ENCODE measurements at regions of chr10 and their contacts with region 1.

Region 1: DNA sequence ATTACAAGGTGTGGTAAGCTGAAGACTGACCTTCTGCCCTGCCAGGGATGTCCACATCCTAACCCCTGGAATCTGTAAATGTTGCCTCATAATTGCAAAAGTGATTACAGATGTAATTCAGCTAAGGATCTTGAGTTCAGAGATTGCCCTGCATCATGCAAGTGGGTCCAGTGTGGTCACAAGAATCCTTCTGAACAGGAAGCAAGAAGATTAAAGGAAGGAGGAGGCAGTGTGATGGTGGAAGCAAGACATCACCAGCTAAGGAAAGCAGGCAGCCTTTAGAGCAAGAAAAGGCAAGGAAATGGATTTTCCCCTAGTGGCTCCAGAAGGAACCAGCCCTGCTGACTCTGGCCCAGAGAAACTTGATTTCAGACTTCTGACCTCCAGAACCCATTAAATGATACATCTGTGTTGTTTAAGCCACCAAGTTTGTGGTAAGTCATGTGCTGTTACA is 78.1 kb downstream of the USP6NL start:
- DNase-seq: peak; percentile 56
- H3K4me3 ChIP-seq: peak overlapping the region; percentile 62
- H3K27ac ChIP-seq: peak overlapping the region; percentile 95
- H3K4me1 ChIP-seq: peaks cover 100% of the 10 kb centered on the region
- CTCF ChIP-seq: peak; percentile 66

Region 2: GRCh38 chr10:11227103-11227502 is 306.3 kb before region 1 on chr10:
- CTCF ChIA-PET with region 1: no interaction called
- POLR2A ChIA-PET with region 1: no interaction called
- intact Hi-C with region 1: no loop called
- DNase-seq: no peak
- H3K4me3 ChIP-seq: no peak overlapping the region
- H3K27ac ChIP-seq: no peak overlapping the region
- H3K4me1 ChIP-seq: no peaks in the 10 kb centered on the region
- CTCF ChIP-seq: no peak

Region 3: DNA sequence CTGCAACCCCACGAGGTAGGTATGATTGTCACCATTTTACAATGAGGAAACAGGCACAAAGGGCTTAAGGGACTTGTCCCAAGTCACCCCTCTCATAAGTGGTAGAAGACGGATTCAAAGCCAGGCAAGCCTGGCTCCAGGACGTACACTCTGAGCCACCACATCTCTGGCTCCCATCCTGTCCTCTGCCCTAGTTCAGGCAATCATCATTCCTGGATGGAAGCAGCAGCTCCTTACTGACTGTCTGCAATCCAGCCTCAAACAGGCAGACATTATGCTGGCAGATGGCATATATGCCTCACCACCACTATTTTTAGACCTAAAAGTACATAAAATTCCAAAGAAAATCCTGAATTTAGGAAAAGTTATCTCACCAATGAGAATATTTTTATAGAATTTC is 22.6 kb before region 1 on chr10:
- CTCF ChIA-PET with region 1: no interaction called
- POLR2A ChIA-PET with region 1: no interaction called
- intact Hi-C with region 1: no loop called
- DNase-seq: no peak
- H3K4me3 ChIP-seq: no peak overlapping the region
- H3K27ac ChIP-seq: no peak overlapping the region
- H3K4me1 ChIP-seq: peaks cover 6% of the 10 kb centered on the region
- CTCF ChIP-seq: no peak

Region 4: DNA sequence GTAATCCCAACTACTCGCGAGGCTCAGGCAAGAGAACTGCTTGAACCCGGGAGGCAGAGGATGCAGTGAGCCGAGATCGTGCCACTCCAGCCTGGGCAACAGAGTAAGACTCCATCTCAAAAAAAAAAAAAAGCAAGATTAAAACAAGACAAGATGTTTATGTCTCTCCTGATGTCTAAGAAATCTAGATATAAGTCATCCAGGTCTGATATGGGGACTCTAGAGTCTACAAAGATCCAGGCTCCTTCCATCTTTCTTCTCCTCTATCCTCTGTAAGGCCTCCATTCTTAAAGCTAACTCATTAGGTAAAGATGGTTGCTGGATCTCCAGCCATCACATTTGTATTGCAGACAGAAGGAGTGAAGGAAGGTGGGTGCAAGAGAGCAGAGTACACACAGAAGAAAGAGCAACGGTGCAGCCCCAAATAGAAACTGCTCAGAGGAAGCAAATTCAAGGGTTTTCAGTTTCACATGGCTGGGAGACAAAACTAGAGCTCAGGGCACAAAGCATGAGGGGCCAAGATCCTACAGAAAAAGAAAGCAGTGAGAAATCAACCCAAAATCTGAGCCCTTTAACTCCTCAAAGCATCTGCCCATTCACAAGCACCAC is 20.5 kb after region 1 on chr10:
- CTCF ChIA-PET with region 1: interaction called, 10 read pairs
- POLR2A ChIA-PET with region 1: interaction called, 21 read pairs
- intact Hi-C with region 1: loop called (anchors 2 kb)
- DNase-seq: peak; percentile 82
- H3K4me3 ChIP-seq: peak overlapping the region; percentile 56
- H3K27ac ChIP-seq: peak overlapping the region; percentile 90
- H3K4me1 ChIP-seq: peaks cover 74% of the 10 kb centered on the region
- CTCF ChIP-seq: no peak

Region 5: DNA sequence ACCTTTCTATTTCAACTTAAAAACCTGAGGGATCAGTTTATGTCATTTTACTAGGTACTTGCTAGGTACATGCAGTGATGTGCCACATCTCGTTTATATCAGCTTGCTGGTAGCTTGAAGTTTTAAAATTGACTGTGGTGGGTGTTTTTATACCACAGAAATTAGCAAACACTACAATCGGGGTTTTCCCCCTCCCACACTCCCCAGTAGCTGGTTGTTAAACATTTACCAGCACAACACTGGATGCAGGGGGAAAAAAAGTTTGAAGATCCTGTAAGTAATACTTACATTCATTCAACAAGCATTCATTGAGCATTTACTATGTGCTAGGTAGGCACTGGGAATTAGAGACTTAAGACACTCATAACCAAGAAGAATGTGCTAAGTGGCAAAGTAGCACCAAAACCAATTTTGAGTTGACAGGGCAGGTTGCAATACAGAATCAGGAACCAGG is 45.5 kb after region 1 on chr10:
- CTCF ChIA-PET with region 1: no interaction called
- POLR2A ChIA-PET with region 1: interaction called, 10 read pairs
- intact Hi-C with region 1: loop called (anchors 5 kb)
- DNase-seq: no peak
- H3K4me3 ChIP-seq: no peak overlapping the region
- H3K27ac ChIP-seq: no peak overlapping the region
- H3K4me1 ChIP-seq: peaks cover 40% of the 10 kb centered on the region
- CTCF ChIP-seq: no peak

Region 6: GRCh38 chr10:11663763-11664555 is 130.6 kb after region 1 on chr10:
- CTCF ChIA-PET with region 1: interaction called, 3 read pairs
- POLR2A ChIA-PET with region 1: interaction called, 14 read pairs
- intact Hi-C with region 1: no loop called
- DNase-seq: peak; percentile 72
- H3K4me3 ChIP-seq: peak overlapping the region; percentile 53
- H3K27ac ChIP-seq: peak overlapping the region; percentile 96
- H3K4me1 ChIP-seq: peaks cover 83% of the 10 kb centered on the region
- CTCF ChIP-seq: no peak

Region 7: GRCh38 chr10:11678074-11678793 is 144.9 kb after region 1 on chr10:
- CTCF ChIA-PET with region 1: no interaction called
- POLR2A ChIA-PET with region 1: interaction called, 14 read pairs
- intact Hi-C with region 1: loop called (anchors 1 kb)
- DNase-seq: peak; percentile 96
- H3K4me3 ChIP-seq: peak overlapping the region; percentile 41
- H3K27ac ChIP-seq: peak overlapping the region; percentile 100
- H3K4me1 ChIP-seq: peaks cover 94% of the 10 kb centered on the region
- CTCF ChIP-seq: no peak

Measured in OCI-LY7 (cell line).